ENCODE measurements at regions of chr1 and their contacts with region 1.

Region 1: GRCh38 chr1:110312188-110313121 is 26.7 kb upstream of the RBM15 start:
- DNase-seq: no peak
- H3K4me3 ChIP-seq: no peak overlapping the region
- CTCF ChIP-seq: peak; percentile 97

Region 2: GRCh38 chr1:110069404-110070281 is 242.8 kb before region 1 on chr1:
- CTCF ChIA-PET with region 1: no interaction called
- POLR2A ChIA-PET with region 1: no interaction called
- DNase-seq: no peak
- H3K4me3 ChIP-seq: no peak overlapping the region
- CTCF ChIP-seq: no peak

Region 3: DNA sequence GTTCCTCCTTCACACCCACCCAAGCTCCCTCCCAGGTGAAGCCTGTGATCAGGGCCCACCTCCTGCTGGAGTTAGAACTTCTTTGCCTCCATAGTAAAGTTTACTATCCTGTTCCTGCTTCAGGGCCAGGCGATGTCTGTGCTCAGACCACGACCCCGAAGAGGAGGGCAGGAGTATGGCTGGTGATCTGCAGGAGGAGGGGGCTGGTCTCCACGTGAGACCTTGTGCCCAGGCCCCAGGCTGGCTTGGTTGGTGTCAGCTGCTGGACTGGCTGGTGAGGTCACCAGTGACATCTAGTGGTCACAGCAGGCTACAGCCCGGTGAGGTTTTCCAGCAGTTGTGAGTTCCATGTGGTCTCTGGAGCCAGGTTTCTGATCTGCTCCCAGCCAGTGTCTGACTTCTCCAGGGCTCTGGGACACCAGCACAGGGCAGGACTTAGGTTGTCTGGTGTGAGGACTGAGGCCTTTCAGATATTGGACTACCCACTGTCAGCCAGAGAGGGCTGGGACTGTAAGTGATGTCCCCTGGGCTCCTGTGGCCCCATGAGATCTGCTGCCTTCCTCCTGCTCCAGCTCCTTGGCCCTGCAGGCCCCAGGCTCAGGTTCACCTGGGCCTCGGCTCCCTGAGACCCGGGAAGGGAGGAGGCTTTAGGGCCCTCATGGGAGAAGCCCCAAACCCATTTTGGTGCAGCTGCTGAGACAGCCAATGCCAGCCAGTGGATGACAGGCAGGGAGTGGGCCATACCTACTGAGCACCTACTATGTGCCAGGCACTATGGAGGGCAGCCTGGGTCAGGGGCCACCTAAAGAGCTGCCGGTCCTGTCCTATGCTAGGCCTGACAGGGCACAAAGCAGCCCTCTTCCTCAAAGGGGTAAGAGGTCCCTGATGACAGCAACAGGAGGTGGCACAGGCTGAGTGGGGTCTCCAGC is 206.2 kb before region 1 on chr1:
- CTCF ChIA-PET with region 1: no interaction called
- POLR2A ChIA-PET with region 1: no interaction called
- DNase-seq: no peak
- H3K4me3 ChIP-seq: no peak overlapping the region
- CTCF ChIP-seq: peak; percentile 92

Region 4: DNA sequence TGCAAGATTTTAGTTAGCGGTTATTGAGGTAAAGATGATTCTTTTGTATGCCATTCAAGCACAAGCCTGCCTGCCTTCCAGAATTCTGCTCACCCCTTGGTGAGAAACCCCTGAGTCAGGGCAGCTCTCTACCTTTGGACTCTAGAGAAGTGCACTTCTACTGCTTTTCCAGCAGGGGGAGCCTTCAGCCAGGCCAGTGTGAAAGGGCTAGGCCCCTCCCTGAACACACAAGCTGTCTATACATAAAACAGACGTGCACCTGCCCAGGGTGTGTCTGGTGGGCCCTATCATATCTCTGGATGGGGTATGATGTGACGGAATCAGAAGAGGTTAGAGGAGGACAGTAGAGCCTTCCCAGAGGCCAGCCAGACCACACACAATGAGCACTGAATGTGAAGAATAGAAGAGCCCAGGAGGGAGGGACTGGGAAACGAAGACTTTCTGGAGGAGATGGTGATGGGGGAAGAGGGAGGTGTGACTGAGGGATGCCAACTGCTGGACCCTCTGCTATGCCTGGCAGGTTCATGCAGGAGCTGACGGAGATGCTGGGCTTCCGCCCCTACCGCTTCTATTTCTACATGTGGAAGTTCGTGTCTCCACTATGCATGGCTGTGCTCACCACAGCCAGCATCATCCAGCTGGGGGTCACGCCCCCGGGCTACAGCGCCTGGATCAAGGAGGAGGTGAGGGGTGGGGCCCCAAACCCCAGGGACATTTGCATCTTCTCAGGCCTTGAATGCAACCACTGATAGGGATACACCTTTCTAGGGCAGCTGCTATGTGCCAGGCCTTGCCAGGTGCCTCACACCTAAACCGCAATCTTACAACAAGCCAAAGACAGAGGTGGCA is 115.3 kb before region 1 on chr1:
- CTCF ChIA-PET with region 1: interaction called, 828 read pairs
- POLR2A ChIA-PET with region 1: interaction called, 3 read pairs
- DNase-seq: no peak
- H3K4me3 ChIP-seq: no peak overlapping the region
- CTCF ChIP-seq: peak; percentile 92

Region 5: GRCh38 chr1:110292031-110292741 is 20.3 kb before region 1 on chr1:
- CTCF ChIA-PET with region 1: interaction called, 25 read pairs
- POLR2A ChIA-PET with region 1: interaction called, 3 read pairs
- DNase-seq: no peak
- H3K4me3 ChIP-seq: no peak overlapping the region
- CTCF ChIP-seq: no peak

Region 6: DNA sequence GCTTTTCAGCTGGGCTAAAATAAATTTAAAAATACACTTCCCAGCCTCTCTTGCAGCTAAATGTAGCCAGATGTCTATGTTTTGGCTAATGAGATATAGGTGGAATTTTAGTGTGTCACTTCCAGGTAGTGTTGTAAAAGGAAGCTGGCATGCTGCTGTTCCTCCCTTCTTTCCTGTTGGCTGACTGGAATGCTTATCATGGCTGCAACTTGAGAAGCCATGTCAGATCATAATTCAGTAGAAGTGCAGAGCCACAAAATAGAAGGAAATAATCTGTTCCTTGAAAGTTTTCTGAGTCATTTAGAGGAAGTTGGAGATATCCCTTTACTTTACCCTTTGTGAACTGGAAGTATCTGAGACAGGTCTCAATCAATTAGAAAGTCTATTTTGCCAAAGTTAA is 15.8 kb after region 1 on chr1:
- CTCF ChIA-PET with region 1: interaction called, 114 read pairs
- POLR2A ChIA-PET with region 1: no interaction called
- DNase-seq: no peak
- H3K4me3 ChIP-seq: no peak overlapping the region
- CTCF ChIP-seq: no peak

Region 7: GRCh38 chr1:110455151-110455550 is 142.7 kb after region 1 on chr1:
- CTCF ChIA-PET with region 1: interaction called, 44 read pairs
- POLR2A ChIA-PET with region 1: interaction called, 5 read pairs
- DNase-seq: no peak
- H3K4me3 ChIP-seq: no peak overlapping the region
- CTCF ChIP-seq: peak; percentile 10